OCI-LY7 (cell line): ENCODE measurements at regions of chr3 and their contacts with region 1.

Region 1: DNA sequence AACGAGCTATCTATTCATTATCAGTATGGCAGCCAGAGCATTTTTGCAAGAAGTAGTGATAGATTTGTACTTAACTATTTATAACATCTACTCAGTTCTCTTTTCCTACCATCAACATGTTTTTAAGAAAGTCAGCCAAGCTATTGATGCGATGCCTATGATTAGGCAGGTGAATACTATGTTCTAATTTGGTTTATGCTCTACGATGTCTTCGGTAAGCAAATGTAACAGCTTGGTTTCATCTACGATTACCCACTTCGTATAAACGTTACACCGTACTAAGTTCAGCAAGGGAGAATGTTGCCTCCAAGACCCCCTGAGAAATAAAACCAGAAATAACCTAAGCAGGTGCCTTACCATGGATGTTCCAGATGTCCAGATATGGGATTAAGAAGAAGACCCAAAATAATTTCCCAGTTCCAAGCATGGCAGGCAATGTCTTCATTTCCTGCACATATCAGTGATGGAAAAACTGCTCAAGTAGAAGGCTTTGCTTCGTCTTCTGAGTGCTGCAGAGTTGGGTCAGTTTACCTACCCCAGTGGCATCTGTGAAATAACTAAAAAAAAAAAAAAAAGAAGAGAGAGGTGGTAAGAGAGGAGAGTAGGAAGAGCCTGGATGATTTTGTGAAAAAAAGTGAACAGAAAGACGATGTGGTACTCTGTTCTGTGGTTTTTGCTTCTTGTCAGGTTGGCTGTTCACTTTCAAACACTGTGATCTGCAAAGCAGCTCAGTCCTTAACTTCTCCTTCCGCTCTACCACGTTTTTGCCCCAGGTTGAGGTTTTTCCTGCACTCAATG is at the start of gene BTLA:
- DNase-seq: peak; percentile 74
- H3K4me3 ChIP-seq: peak within 1 kb of the TSS; percentile 72
- H3K27ac ChIP-seq: peak within 1 kb of the TSS; percentile 85
- H3K4me1 ChIP-seq: peaks cover 55% of the 10 kb centered on the region
- CTCF ChIP-seq: no peak
- total RNA-seq, gene BTLA: 7.7 and 8.0 TPM in 2 replicates

Region 2: GRCh38 chr3:112464264-112464663 is 34.8 kb before region 1 on chr3:
- CTCF ChIA-PET with region 1: interaction called, 3 read pairs
- POLR2A ChIA-PET with region 1: interaction called, 3 read pairs
- intact Hi-C with region 1: loop called (anchors 2 kb)
- DNase-seq: peak; percentile 58
- H3K4me3 ChIP-seq: peak overlapping the region; percentile 39
- H3K27ac ChIP-seq: peak overlapping the region; percentile 31
- H3K4me1 ChIP-seq: peaks cover 37% of the 10 kb centered on the region
- CTCF ChIP-seq: no peak